Activated CD4-positive, alpha-beta T cell treated with anti-CD3 and anti-CD28 coated beads, Interleukin-2, amount 10 ng/mL, durations not matched to agents 24 days and 14 days (primary cell): ENCODE measurements at regions of chr14 and their contacts with region 1.

Region 1: GRCh38 chr14:67137744-67138371 is 51.4 kb upstream of the GARIN2 start:
- DNase-seq: no peak
- H3K4me3 Mint-ChIP-seq: no peak overlapping the region
- H3K27ac Mint-ChIP-seq: no peak overlapping the region
- H3K4me1 Mint-ChIP-seq: peaks cover 8% of the 10 kb centered on the region
- H3K27me3 Mint-ChIP-seq: no peaks in the 10 kb centered on the region

Region 2: GRCh38 chr14:66610154-66610563 is 527.7 kb before region 1 on chr14:
- intact Hi-C with region 1: loop called (anchors 5 kb)
- DNase-seq: peak; percentile 71
- H3K4me3 Mint-ChIP-seq: peak overlapping the region; percentile 27
- H3K27ac Mint-ChIP-seq: peak overlapping the region; percentile 43
- H3K4me1 Mint-ChIP-seq: peaks cover 18% of the 10 kb centered on the region
- H3K27me3 Mint-ChIP-seq: no peaks in the 10 kb centered on the region

Region 3: DNA sequence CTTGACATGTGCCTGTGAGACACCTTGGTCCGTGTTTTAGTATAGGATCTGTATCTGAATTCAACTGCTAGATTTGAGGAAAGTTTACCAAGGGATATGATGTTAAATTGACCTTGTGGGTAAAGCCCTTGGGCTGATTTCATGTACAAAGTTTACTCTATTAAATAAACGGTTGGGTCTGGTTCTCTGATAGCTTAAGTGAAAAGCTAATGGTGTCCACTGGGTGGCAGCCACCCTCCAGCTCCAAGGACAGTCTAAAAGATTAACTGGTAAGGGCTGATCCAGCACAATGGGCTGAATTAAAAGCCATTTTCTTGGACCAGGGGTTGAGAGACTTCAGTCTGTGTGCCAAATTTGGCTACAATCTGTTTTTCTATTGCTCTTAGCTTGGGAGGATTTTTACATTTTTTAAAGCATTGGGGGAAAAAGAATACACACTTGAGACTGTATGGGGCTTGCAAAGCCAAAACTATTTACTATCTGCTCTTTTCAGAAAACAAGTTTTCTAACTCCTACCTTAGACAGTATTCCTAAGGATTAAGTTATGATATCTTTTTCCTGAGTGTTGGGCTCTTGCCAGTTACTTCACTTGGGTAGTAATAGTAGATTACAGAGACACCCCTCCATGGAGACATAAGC is 513.4 kb before region 1 on chr14:
- intact Hi-C with region 1: loop called (anchors 1 kb)
- DNase-seq: peak; percentile 78
- H3K4me3 Mint-ChIP-seq: no peak overlapping the region
- H3K27ac Mint-ChIP-seq: no peak overlapping the region
- H3K4me1 Mint-ChIP-seq: no peaks in the 10 kb centered on the region
- H3K27me3 Mint-ChIP-seq: no peaks in the 10 kb centered on the region

Region 4: GRCh38 chr14:67127174-67127573 is 10.7 kb before region 1 on chr14:
- intact Hi-C with region 1: no loop called
- DNase-seq: no peak
- H3K4me3 Mint-ChIP-seq: no peak overlapping the region
- H3K27ac Mint-ChIP-seq: no peak overlapping the region
- H3K4me1 Mint-ChIP-seq: no peaks in the 10 kb centered on the region
- H3K27me3 Mint-ChIP-seq: no peaks in the 10 kb centered on the region

Region 5: GRCh38 chr14:67158566-67158965 is 20.7 kb after region 1 on chr14:
- intact Hi-C with region 1: loop called (anchors 1 kb)
- DNase-seq: no peak
- H3K4me3 Mint-ChIP-seq: no peak overlapping the region
- H3K27ac Mint-ChIP-seq: peak overlapping the region; percentile 15
- H3K4me1 Mint-ChIP-seq: peaks cover 12% of the 10 kb centered on the region
- H3K27me3 Mint-ChIP-seq: no peaks in the 10 kb centered on the region

Region 6: DNA sequence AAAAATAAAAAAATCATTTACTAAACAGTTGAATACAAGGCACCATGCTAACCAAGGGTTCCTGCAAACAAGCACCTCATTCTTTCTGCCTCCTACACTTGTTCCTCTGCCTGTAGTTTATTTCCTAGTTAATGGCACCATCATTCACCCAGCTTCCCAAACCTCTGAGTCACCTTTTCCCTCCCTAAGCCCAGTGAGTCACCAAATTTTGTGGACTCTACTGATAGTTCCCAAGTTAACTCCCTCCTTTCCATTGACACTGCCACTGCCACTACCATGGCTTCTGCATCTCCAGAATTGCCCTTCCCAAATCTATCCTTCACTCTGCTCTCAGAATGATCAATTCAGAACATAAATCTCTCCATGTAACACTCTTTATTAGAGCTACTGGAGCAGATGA is 49.4 kb after region 1 on chr14:
- intact Hi-C with region 1: loop called (anchors 1 kb)
- DNase-seq: no peak
- H3K4me3 Mint-ChIP-seq: no peak overlapping the region
- H3K27ac Mint-ChIP-seq: no peak overlapping the region
- H3K4me1 Mint-ChIP-seq: peaks cover 16% of the 10 kb centered on the region
- H3K27me3 Mint-ChIP-seq: no peaks in the 10 kb centered on the region